Right ventricle myocardium inferior (tissue), 1 donor: ENCODE measurements at regions of chr19 and their contacts with region 1.

Region 1: GRCh38 chr19:49824662-49825061 is 6.6 kb downstream of the MED25 start:
- DNase-seq: no peak
- ATAC-seq: no peak

Region 2: GRCh38 chr19:49838885-49839588 is 14.4 kb after region 1 on chr19:
- intact Hi-C with region 1: loop called (anchors 2 kb)
- DNase-seq: no peak
- ATAC-seq: peak; percentile 55